Dendritic cell treated with granulocyte-macrophage colony-stimulating factor and Interleukin-4, amounts not matched to agents 40 ng/mL and 50 ng/mL, for 4 days (primary cell): ENCODE measurements at regions of chr5 and their contacts with region 1.

Region 1: DNA sequence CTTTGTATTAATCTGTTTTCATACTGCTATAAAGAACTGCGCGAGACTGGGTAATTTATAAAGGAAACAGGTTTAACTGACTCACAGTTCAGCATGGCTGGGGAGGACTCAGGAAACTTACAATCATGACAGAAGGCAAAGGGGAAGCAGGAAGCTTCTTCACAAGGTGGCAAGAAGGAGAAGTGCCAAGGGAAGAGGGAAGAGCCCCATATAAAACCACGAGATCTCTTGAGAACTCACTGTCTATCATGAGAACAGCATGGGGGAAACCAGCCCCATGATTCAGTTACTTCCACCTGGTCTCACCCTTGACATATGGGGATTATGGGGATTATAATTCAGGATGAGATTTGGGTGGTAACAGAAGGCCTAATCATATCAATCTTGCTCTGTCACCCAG is 60.9 kb upstream of the CHD1 start:
- H3K4me3 Mint-ChIP-seq: no peak overlapping the region
- H3K27ac Mint-ChIP-seq: peak overlapping the region; percentile 67
- H3K4me1 Mint-ChIP-seq: peaks cover 18% of the 10 kb centered on the region
- H3K27me3 Mint-ChIP-seq: no peaks in the 10 kb centered on the region

Region 2: DNA sequence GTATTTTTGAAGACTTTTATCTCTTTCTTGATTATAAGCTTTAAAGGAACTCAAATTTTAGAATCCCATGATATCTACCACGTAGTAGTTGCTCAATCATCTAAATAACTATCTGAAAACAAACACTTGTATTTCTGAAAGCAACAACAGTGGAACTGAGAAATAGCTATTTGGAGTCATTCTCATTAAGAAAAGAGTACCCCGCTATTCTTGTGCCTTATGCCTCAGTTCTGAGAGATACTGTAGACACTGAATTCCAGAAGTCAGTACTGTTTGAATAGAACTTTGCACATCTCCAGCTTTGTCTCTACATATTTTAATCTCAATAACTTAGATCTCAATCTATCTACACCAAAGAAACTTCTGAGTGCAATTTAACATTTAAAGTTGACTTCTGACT is 72.3 kb before region 1 on chr5:
- intact Hi-C with region 1: no loop called
- H3K4me3 Mint-ChIP-seq: no peak overlapping the region
- H3K27ac Mint-ChIP-seq: peak overlapping the region; percentile 22
- H3K4me1 Mint-ChIP-seq: peaks cover 56% of the 10 kb centered on the region
- H3K27me3 Mint-ChIP-seq: no peaks in the 10 kb centered on the region

Region 3: GRCh38 chr5:98928873-98929696 is 60.6 kb before region 1 on chr5 and contains the start of gene CHD1:
- intact Hi-C with region 1: loop called (anchors 10 kb)
- H3K4me3 Mint-ChIP-seq: peak within 1 kb of the TSS; percentile 100
- H3K27ac Mint-ChIP-seq: peak within 1 kb of the TSS; percentile 95
- H3K4me1 Mint-ChIP-seq: peaks cover 31% of the 10 kb centered on the region
- H3K27me3 Mint-ChIP-seq: no peaks in the 10 kb centered on the region

Region 4: DNA sequence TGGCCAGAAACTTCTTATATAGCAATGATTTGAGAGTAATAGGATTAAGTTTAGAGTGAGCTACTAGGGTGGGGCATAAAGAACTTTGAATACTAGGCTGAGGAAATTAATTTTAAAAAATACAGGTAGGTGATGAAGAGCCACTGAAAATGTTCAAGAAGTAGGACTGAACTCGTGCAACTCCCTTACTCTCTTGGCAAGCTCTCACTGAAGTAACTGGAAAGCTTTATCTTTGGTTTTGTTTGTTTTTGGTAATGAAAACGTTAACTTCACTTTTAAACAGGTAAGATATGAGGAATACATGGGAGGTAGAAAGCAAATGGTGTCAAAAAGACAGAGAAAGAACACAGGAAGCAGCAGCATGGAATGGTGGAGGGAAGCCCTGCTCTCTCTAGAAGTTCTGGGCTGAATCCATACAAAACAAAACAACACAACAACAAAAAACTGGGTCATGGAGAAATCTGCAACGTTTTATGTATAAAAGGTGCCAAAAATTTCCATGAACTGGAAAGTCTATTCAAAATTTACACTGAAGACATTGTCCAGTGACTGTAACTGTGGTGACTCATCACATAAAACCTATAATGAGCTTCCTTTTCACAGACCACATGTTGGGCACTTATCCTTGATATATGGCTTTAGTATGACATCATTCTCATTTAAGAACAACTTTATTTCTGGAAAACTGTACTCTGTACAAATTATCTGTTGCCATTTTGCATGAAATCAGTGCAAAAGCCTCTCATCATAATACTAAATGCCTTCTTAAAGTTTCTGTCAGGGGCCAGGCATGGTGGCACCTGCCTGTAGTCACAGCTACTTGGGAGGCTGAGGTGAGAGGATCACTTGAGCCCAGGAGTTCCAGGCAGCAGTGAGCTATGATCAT is 30.3 kb after region 1 on chr5:
- intact Hi-C with region 1: loop called (anchors 5 kb)
- H3K4me3 Mint-ChIP-seq: no peak overlapping the region
- H3K27ac Mint-ChIP-seq: peak overlapping the region; percentile 15
- H3K4me1 Mint-ChIP-seq: peaks cover 36% of the 10 kb centered on the region
- H3K27me3 Mint-ChIP-seq: no peaks in the 10 kb centered on the region